H1 (cell line): ENCODE measurements at regions of chr1 and their contacts with region 1.

Region 1: GRCh38 chr1:231931846-231932454 is 305.4 kb downstream of the DISC1 start:
- DNase-seq: peak; percentile 15 to 83
- H3K4me3 ChIP-seq: no peak overlapping the region
- H3K27ac ChIP-seq: no peak overlapping the region
- H3K4me1 ChIP-seq: peaks cover 0 to 5% (median 1%) of the 10 kb centered on the region in 4 experiments; a peak in 1 of 7 replicates
- H3K27me3 ChIP-seq: no peaks in the 10 kb centered on the region; a peak in 1 of 7 replicates
- CTCF ChIP-seq: peak; percentile 52 to 83 (median 55)
- EP300 ChIP-seq: no peak
- POLR2A ChIP-seq: no peak
- RAD21 ChIP-seq: peak; percentile 27 to 41

Region 2: GRCh38 chr1:231918239-231919015 is 13.5 kb before region 1 on chr1:
- CTCF ChIA-PET with region 1: interaction called, 26 read pairs
- POLR2A ChIA-PET with region 1: no interaction called
- DNase-seq: no peak
- H3K4me3 ChIP-seq: no peak overlapping the region
- H3K27ac ChIP-seq: no peak overlapping the region
- H3K4me1 ChIP-seq: no peaks in the 10 kb centered on the region; a peak in 1 of 7 replicates
- H3K27me3 ChIP-seq: no peaks in the 10 kb centered on the region; a peak in 1 of 7 replicates
- CTCF ChIP-seq: no peak
- EP300 ChIP-seq: no peak
- POLR2A ChIP-seq: no peak
- RAD21 ChIP-seq: no peak

Region 3: GRCh38 chr1:231949277-231950091 is 17.5 kb after region 1 on chr1:
- CTCF ChIA-PET with region 1: interaction called, 48 read pairs
- POLR2A ChIA-PET with region 1: interaction called, 4 read pairs
- DNase-seq: peak; percentile 27 to 56
- H3K4me3 ChIP-seq: no peak overlapping the region
- H3K27ac ChIP-seq: no peak overlapping the region
- H3K4me1 ChIP-seq: peaks cover 0 to 4% (median 1%) of the 10 kb centered on the region in 4 experiments; a peak in 1 of 7 replicates
- H3K27me3 ChIP-seq: no peaks in the 10 kb centered on the region
- CTCF ChIP-seq: peak; percentile 25 to 63 (median 49); a peak in 3 of 4 replicates
- EP300 ChIP-seq: no peak
- POLR2A ChIP-seq: no peak
- RAD21 ChIP-seq: peak; percentile 29 to 43; a peak in 3 of 4 replicates

Region 4: GRCh38 chr1:232090816-232091215 is 158.9 kb after region 1 on chr1:
- CTCF ChIA-PET with region 1: no interaction called
- POLR2A ChIA-PET with region 1: no interaction called
- DNase-seq: no peak
- H3K4me3 ChIP-seq: no peak overlapping the region
- H3K27ac ChIP-seq: no peak overlapping the region
- H3K4me1 ChIP-seq: no peaks in the 10 kb centered on the region
- H3K27me3 ChIP-seq: no peaks in the 10 kb centered on the region
- CTCF ChIP-seq: no peak
- EP300 ChIP-seq: no peak
- POLR2A ChIP-seq: no peak
- RAD21 ChIP-seq: no peak